ENCODE measurements at regions of chr10 and their contacts with region 1.

Region 1: GRCh38 chr10:130110246-130111112 is at the start of gene C10orf143:
- DNase-seq: peak; percentile 98 to 99
- H3K4me3 ChIP-seq: peak within 1 kb of the TSS; percentile 67 to 74
- H3K27ac ChIP-seq: peak within 1 kb of the TSS; percentile 84 to 90
- H3K4me1 ChIP-seq: peaks cover 0 to 30% (median 23%) of the 10 kb centered on the region in 4 donors
- H3K27me3 ChIP-seq: no peaks in the 10 kb centered on the region
- CTCF ChIP-seq: no peak

Region 2: GRCh38 chr10:129030996-129031843 is 1079.3 kb before region 1 on chr10:
- intact Hi-C with region 1: loop called (anchors 10 kb)
- DNase-seq: peak in 1 of 2 donors; percentile 46
- H3K4me3 ChIP-seq: no peak overlapping the region
- H3K27ac ChIP-seq: no peak overlapping the region
- H3K4me1 ChIP-seq: no peaks in the 10 kb centered on the region
- H3K27me3 ChIP-seq: peaks cover 0 to 48% of the 10 kb centered on the region in 2 donors
- CTCF ChIP-seq: peak; percentile 89 to 96

Region 3: DNA sequence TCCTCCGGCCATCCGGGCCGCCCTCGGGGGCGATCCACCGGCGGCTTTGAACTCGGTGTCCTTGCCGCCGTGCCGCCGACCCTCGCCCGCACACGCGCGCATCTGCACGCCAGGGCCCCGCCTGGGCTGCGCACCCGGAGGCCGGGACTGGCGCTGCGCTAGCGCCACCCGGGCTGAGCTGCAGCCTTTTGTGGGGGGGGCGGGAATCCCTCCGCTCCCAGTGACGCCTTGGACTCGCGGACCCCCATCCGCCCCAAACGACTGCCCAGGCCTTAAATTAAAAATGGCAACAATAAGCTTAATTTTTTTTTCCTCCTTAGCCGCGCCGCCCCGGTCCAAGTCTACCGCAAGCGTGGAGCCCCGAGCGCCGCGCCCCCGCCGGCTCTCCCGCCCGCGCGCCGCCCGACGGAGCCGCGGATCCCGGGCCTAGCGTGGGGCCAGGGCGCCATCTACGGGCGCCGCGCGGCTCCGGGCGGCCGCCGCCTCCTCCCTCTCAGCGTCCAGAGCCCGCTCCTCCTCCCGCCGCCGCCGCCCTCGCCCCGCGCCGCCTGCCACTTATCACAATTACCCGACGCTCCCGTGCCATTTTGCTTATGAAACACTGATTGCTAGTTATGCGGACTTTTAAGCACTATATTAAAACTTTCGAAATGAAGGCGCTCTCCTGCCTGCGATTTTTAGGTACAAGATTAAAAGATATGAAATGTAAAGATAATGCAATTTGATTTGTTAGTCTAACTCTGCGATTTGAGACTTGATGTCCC is 138.9 kb before region 1 on chr10:
- intact Hi-C with region 1: no loop called
- DNase-seq: peak; percentile 55 to 69
- H3K4me3 ChIP-seq: peak overlapping the region; percentile 27 to 42
- H3K27ac ChIP-seq: no peak overlapping the region
- H3K4me1 ChIP-seq: peaks cover 0 to 55% (median 33%) of the 10 kb centered on the region in 4 donors
- H3K27me3 ChIP-seq: peaks cover 0 to 94% of the 10 kb centered on the region in 2 donors
- CTCF ChIP-seq: peak; percentile 43 to 59

Region 4: DNA sequence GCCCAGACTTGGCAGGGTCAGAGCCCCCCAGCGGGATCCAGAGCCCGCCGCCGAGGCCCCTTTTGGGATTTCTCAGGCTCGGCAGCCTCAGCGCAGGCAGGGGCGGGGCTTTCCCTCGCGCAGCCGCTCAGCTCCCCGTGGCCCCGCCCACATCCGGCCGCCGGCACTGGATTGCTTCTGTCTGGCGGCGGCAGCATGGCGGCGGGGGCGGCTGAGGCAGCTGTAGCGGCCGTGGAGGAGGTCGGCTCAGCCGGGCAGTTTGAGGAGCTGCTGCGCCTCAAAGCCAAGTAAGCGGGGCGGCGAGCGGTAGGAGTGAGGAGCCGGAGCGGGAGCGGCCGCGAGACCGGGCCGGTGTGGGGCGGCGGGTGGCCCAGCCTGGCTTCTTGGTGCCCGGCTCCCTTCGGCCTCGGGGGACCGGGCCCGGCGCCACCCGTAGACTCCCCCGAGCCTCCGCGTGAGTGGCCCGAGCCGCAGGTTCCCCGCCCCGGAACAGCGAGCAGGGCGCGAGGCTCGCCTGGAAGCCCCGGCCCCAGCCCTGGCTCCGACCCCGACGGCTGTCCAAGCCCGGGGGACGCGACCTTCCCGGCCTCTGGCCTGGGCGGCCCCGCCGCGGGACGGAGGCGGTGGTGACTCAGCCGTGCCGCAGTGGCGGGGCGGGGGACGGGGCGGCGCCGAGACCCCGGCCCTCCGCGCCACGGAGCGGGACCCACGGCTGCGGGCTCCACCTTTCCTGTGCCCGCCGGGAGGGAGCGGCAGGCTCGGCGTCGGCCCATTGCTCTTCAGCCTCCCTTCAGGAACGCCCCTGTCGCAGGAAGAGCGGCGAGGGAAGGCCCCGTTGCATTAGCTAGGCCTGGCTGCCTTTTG is 26.0 kb after region 1 on chr10 and contains the start of gene GLRX3:
- intact Hi-C with region 1: loop called (anchors 2 kb)
- DNase-seq: peak; percentile 88 to 92
- H3K4me3 ChIP-seq: peak within 1 kb of the TSS; percentile 88 to 92
- H3K27ac ChIP-seq: peak within 1 kb of the TSS; percentile 76 to 84
- H3K4me1 ChIP-seq: peaks cover 0 to 46% (median 27%) of the 10 kb centered on the region in 4 donors
- H3K27me3 ChIP-seq: no peaks in the 10 kb centered on the region
- CTCF ChIP-seq: no peak